CD4-positive, alpha-beta T cell (primary cell): ENCODE measurements at regions of chr7 and their contacts with region 1.

Region 1: DNA sequence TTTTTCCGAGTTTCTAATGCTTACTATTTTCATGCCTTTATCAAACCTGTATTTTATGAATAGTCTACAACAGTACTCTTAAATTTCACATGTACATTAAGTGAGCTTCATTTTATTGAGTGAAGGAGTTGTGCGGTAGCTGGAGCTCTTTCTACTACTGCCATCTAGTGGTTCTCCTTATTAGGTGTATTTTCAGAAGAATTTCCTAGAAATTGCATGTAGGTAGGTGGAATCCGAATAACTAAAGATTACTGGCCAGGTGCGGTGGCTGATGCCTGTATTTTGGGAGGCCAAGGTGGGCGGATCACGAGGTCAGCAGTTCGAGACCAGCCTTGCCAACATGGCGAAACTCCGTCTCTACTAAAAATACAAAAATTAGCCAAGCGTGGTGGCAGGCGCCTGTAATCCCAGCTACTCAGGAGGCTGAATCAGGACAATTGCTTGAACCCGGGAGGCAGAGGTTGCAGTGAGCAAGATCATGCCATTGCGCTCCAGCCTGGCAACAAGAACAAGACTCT is 38.3 kb downstream of the LRRC72 start:
- DNase-seq: peak in 4 of 14 experiments; percentile 12 to 64 (median 62)
- ATAC-seq: peak; percentile 54
- H3K4me3 ChIP-seq: no peak overlapping the region
- H3K4me3 Mint-ChIP-seq: peak overlapping the region; percentile 81
- H3K27ac ChIP-seq: no peak overlapping the region
- H3K27ac Mint-ChIP-seq: no peak overlapping the region
- H3K4me1 ChIP-seq: peaks cover 3% of the 10 kb centered on the region
- H3K4me1 Mint-ChIP-seq: peaks cover 26% of the 10 kb centered on the region
- H3K27me3 ChIP-seq: no peaks in the 10 kb centered on the region
- H3K27me3 Mint-ChIP-seq: peaks cover 5% of the 10 kb centered on the region
- CTCF ChIP-seq: peak; percentile 89

Region 2: DNA sequence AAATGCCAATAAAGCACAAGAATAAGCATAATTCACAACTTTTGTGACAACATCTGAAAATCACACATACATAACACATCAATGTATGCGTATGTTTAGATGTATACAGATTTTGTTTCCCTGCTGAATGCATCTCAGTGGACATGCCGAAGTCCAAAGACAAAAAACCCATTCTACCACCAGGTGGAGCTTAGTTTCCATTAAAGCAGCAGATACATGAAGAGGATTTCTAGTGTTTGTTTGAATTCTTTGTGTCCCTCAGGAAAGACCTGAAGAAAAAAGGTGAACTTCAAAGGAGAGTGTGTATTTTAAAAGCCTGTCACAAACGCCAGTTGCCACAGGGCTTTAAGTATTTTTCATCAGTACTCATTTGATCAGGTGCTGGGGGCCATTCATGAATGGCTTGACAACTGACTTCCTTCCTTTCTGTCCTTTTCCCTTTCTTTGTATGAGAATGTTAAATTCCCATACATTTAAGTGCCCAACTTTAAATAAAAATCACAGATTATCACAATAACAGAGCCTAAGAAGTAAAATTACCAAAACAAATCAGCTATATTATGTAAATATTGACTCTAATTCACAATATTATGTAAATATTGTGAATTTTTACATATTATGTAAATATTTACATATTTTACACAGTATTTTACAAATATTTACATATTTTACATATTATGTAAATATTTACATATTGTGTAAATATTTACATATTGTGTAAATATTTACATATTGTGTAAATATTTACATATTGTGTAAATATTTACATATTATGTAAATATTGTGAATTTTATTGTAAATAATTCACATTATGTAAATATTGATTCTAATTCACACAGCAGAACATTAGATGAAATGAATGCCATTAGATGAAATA is 486.7 kb before region 1 on chr7:
- CTCF ChIA-PET with region 1: interaction called, 7 read pairs
- POLR2A ChIA-PET with region 1: interaction called, 3 read pairs
- intact Hi-C with region 1: loop called in 1 of 2 experiments (anchors 1 kb)
- DNase-seq: peak in 3 of 14 experiments; percentile 43 to 55 (median 55)
- ATAC-seq: no peak
- H3K4me3 ChIP-seq: no peak overlapping the region
- H3K4me3 Mint-ChIP-seq: no peak overlapping the region
- H3K27ac ChIP-seq: no peak overlapping the region
- H3K27ac Mint-ChIP-seq: no peak overlapping the region
- H3K4me1 ChIP-seq: no peaks in the 10 kb centered on the region
- H3K4me1 Mint-ChIP-seq: no peaks in the 10 kb centered on the region
- H3K27me3 ChIP-seq: no peaks in the 10 kb centered on the region
- H3K27me3 Mint-ChIP-seq: no peaks in the 10 kb centered on the region
- CTCF ChIP-seq: peak; percentile 41

Region 3: GRCh38 chr7:16420649-16421332 is 144.2 kb before region 1 on chr7:
- CTCF ChIA-PET with region 1: no interaction called
- POLR2A ChIA-PET with region 1: interaction called, 16 read pairs
- intact Hi-C with region 1: loop called in 1 of 2 experiments (anchors 5 kb)
- DNase-seq: peak; percentile 50 to 94 (median 78)
- ATAC-seq: peak; percentile 89
- H3K4me3 ChIP-seq: peak overlapping the region; percentile 67
- H3K4me3 Mint-ChIP-seq: peak overlapping the region; percentile 90
- H3K27ac ChIP-seq: peak overlapping the region; percentile 77 to 80
- H3K27ac Mint-ChIP-seq: peak overlapping the region; percentile 87
- H3K4me1 ChIP-seq: peaks cover 14% of the 10 kb centered on the region
- H3K4me1 Mint-ChIP-seq: peaks cover 23% of the 10 kb centered on the region
- H3K27me3 ChIP-seq: no peaks in the 10 kb centered on the region
- H3K27me3 Mint-ChIP-seq: no peaks in the 10 kb centered on the region
- CTCF ChIP-seq: peak; percentile 33

Region 4: GRCh38 chr7:16431646-16432424 is 133.1 kb before region 1 on chr7:
- CTCF ChIA-PET with region 1: no interaction called
- POLR2A ChIA-PET with region 1: interaction called, 8 read pairs
- intact Hi-C with region 1: loop called (anchors 1 to 2 kb)
- DNase-seq: peak in 6 of 14 experiments; percentile 1 to 62 (median 42)
- ATAC-seq: peak; percentile 81
- H3K4me3 ChIP-seq: no peak overlapping the region
- H3K4me3 Mint-ChIP-seq: no peak overlapping the region
- H3K27ac ChIP-seq: no peak overlapping the region
- H3K27ac Mint-ChIP-seq: no peak overlapping the region
- H3K4me1 ChIP-seq: no peaks in the 10 kb centered on the region
- H3K4me1 Mint-ChIP-seq: no peaks in the 10 kb centered on the region
- H3K27me3 ChIP-seq: no peaks in the 10 kb centered on the region
- H3K27me3 Mint-ChIP-seq: no peaks in the 10 kb centered on the region
- CTCF ChIP-seq: peak; percentile 60